ENCODE measurements at regions of chr5 and their contacts with region 1.

Region 1: GRCh38 chr5:5351288-5352089 is 71.0 kb upstream of the ICE1 start:
- DNase-seq: no peak

Region 2: DNA sequence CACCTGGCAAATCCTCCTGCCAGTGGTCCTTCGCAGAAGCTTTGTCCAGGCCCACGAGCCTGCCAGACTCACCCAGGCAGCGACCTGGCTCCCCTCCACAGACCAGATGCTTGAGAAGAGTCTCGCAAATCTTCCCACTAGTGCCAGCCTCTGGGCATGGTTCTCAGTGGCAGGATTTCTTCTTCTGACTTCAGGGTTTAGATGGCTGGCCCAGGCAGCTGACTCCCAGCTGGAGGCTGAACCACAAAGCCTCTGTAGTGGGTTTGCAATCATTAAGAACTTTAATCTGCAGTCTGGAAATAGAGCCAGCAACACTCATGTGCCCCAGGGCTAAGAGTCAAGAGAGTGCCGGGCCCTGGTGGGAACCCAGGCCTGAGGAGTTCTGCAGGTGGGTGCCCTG is 19.7 kb before region 1 on chr5:
- CTCF ChIA-PET with region 1: no interaction called
- POLR2A ChIA-PET with region 1: interaction called, 36 read pairs
- DNase-seq: no peak

Region 3: DNA sequence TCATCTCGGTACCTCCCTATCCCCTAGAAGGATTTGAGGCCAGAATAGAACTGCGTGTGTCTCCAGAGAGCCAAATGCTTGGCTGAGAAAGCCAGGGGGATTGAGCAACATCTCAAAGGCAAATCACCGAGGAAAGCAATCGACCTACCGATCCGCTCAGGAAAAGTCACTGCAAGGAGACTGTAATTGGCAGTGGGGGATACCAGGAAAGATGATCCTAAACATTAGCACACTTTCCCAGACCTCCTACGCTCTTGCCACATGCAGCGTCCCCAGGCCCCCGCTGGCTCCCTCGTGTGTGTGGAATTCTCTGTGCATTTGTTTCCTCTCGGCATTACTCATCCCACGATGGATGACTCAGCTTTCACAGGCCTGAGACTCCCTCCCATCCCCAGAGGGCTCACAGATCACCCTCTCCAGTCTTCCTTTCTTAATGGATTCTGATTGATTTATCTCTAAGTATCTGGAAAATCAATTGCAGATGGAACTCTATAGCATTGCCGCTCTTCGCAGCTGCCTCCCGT is 11.2 kb before region 1 on chr5:
- CTCF ChIA-PET with region 1: no interaction called
- POLR2A ChIA-PET with region 1: interaction called, 36 read pairs
- DNase-seq: peak; percentile 37

Region 4: GRCh38 chr5:5364932-5365331 is 13.4 kb after region 1 on chr5:
- CTCF ChIA-PET with region 1: interaction called, 6 read pairs
- POLR2A ChIA-PET with region 1: interaction called, 80 read pairs
- DNase-seq: no peak

Region 5: GRCh38 chr5:5370059-5370774 is 18.7 kb after region 1 on chr5:
- CTCF ChIA-PET with region 1: interaction called, 6 read pairs
- POLR2A ChIA-PET with region 1: interaction called, 80 read pairs
- DNase-seq: no peak

Region 6: GRCh38 chr5:5421961-5422818 is 70.7 kb after region 1 on chr5 and contains the start of gene ICE1:
- CTCF ChIA-PET with region 1: interaction called, 6 read pairs
- POLR2A ChIA-PET with region 1: interaction called, 20 read pairs
- DNase-seq: peak; percentile 91

Region 7: GRCh38 chr5:5456858-5457257 is 105.4 kb after region 1 on chr5:
- CTCF ChIA-PET with region 1: no interaction called
- POLR2A ChIA-PET with region 1: no interaction called
- DNase-seq: no peak

Measured in HEK293T (cell line).